Aorta (tissue), 5 donors: ENCODE measurements at regions of chr3 and their contacts with region 1.

Region 1: GRCh38 chr3:40524568-40525285 is at the start of gene ZNF621:
- DNase-seq: peak; percentile 95 to 97
- ATAC-seq: peak; percentile 99
- H3K4me3 ChIP-seq: peak within 1 kb of the TSS; percentile 44 to 68
- H3K27ac ChIP-seq: peak within 1 kb of the TSS; percentile 3 to 81
- H3K4me1 ChIP-seq: no peaks in the 10 kb centered on the region
- H3K27me3 ChIP-seq: no peaks in the 10 kb centered on the region
- total RNA-seq, gene ZNF621: 24.1 to 35.1 TPM

Region 2: DNA sequence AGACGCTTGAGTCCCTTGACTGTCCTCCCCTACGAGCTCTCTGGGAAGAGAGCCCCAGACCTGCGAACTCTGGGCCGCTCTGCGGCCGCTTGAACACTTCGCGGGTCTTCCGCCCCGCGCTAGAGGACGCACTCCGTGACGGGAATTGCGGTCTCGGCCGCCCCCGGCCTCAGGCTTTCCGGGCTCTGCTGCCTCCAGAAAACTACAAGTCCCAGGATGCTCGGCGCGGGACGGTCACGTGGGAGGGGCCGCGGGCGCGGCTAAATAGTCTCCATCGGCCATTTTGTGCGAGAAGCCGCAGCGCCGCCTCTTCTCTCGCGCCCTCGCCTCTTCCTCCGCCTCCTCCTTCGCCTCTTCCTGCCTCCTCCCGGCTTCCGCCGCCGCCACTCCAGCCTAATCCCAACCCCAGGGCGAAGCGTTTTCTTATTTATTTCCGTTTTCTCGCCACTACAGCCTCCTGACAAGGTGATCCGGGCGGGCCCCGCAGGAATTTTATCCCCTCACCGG is 215.3 kb before region 1 on chr3 and contains the start of gene EIF1B:
- intact Hi-C with region 1: loop called in 1 of 2 experiments (anchors 10 kb)
- DNase-seq: peak; percentile 99 to 100
- ATAC-seq: peak; percentile 99
- H3K4me3 ChIP-seq: peak within 1 kb of the TSS; percentile 94 to 100
- H3K27ac ChIP-seq: peak within 1 kb of the TSS; percentile 97 to 98
- H3K4me1 ChIP-seq: no peaks in the 10 kb centered on the region
- H3K27me3 ChIP-seq: no peaks in the 10 kb centered on the region
- total RNA-seq, gene EIF1B: 51.3 to 51.6 TPM

Region 3: GRCh38 chr3:40333416-40333815 is 191.3 kb before region 1 on chr3:
- intact Hi-C with region 1: no loop called
- DNase-seq: no peak
- ATAC-seq: no peak
- H3K4me3 ChIP-seq: no peak overlapping the region
- H3K27ac ChIP-seq: no peak overlapping the region
- H3K4me1 ChIP-seq: no peaks in the 10 kb centered on the region
- H3K27me3 ChIP-seq: no peaks in the 10 kb centered on the region

Region 4: DNA sequence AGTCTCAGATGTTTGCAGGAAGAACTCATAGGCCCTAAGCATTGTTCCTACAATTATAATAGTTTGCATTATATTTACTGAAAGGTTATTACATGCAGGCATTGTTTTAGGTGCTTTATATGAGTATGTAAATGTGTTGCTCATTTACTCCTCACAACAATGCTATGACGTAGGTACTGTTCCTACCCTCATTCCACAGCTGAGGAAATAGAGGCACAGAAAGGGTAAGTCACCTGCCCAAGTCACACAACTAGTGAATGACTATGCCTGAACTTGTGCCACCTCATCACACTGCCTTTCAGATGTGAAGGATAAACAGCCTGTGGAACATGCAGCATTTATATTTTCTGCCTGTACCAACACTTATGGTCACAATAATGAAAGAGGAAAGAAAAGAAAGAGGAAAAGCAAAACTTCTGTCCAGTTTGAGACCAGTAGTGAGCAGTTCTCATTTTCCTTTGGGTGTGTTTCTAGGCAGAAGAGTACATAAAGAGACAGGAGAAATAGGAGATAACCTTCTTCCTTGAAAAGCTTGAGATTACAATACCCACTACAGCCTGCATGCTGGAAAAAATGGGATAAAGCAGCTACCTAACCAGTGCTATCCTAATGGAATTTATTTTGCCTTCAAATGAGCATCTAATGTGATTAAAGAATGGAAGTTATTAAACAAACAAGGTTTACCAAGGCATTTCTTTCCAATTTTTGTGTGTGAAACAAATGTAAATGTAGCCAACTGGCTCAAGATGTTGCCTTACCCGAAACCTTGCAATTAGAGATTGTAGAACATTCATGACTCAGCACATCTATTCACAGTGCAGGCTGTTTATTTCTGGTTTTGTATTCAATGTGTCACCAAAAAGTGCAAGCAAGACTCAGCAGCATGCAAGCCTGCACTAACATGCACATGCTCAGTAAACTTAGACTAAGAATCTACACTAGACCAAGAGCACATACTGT is 158.2 kb before region 1 on chr3:
- intact Hi-C with region 1: no loop called
- DNase-seq: no peak
- ATAC-seq: no peak
- H3K4me3 ChIP-seq: no peak overlapping the region
- H3K27ac ChIP-seq: no peak overlapping the region
- H3K4me1 ChIP-seq: no peaks in the 10 kb centered on the region
- H3K27me3 ChIP-seq: no peaks in the 10 kb centered on the region

Region 5: DNA sequence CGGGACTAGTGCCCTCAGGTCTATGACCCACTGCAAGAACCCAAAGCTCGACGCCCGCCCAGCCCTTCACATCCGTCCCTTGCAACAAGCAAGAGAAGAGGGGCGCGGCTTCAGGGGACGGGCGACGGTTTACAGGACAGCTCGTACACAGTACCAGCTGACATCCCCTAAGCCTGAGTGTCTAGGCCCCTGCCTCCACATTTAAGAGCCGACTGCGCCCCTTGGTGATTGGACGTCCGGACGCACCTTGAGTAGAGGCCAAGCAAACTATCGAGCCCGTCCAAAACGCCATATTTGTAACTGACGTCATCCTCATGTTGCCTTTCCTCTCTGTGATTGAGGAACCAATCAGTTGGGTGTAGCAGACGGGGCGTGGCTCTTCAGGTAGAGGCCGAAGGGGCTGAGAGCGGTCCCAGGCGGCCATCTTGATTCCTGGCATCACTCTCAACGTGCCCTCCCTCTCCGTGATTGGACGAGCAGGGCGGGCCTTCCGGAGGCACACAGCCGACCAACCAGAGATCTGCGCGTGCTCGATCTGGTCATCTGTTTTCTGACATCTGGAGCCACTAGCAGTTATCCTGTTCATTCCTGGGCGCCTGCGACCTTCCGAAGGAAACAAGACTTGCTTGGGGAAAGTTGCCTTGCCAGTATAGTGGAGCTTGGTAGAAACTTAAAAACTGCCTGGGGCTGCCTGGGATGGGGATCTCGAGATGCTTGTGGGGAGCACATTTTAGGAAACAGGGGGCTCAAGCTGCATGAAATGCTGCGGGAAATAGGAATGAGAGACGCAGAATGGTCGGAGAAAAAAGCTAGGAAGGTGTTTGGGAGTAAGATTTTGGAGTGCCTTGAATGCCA is 71.6 kb before region 1 on chr3:
- intact Hi-C with region 1: loop called in 1 of 2 experiments (anchors 1 kb)
- DNase-seq: peak; percentile 99
- ATAC-seq: peak; percentile 96
- H3K4me3 ChIP-seq: peak overlapping the region; percentile 37 to 52
- H3K27ac ChIP-seq: peak overlapping the region in 1 of 2 donors; percentile 75
- H3K4me1 ChIP-seq: peaks cover 0 to 2% of the 10 kb centered on the region in 2 donors
- H3K27me3 ChIP-seq: no peaks in the 10 kb centered on the region

Region 6: DNA sequence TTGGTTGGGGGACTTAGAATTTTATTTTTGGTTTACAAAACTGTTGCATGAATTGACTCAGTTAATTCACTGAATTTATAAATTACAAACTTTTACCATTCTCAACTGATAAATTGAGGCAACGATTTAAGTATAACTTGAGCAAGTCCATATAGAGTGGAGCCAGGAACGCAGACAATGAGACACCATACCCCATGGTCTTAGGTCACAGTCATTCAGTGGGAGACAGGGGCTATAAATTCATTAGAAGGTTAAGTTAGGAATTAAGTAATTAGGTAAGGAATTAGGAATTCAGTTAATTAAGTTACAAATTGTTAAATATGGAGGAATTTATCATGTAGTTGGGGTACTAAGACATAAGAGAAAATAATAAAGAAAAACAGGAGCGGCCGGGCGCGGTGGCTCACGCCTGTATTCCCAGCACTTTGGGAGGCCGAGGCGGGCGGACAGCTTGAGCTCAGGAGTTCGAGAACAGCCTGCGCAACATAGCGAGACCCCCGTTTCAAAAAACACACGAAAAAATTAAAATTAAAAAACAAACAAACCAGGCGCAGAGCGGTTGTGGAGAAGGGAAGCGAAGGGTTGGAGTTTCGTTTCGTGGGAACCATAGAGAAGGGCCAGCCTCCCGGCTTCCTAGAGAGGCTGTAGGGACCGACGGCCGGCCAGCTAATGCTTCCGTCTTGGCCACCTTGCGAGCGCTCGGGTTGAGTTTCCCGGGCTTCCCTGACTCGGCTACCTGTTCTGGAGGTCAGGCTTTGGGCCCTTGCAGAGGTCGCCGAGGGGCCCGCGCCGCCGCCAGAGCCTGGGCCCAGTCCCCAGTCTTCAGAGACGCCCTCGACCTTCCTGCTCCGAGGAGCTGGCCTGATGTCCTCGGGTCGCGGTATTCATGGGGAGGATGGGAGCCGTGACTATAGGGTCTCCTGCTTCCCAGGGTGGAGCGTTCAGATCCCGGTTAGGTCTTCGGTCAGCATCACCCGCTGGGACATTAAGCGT is 48.0 kb before region 1 on chr3 and contains the start of gene ZNF619:
- intact Hi-C with region 1: loop called in 1 of 2 experiments (anchors 10 kb)
- DNase-seq: peak; percentile 82 to 92
- ATAC-seq: peak; percentile 96
- H3K4me3 ChIP-seq: peak within 1 kb of the TSS; percentile 63 to 73
- H3K27ac ChIP-seq: peak within 1 kb of the TSS in 1 of 2 donors; percentile 5
- H3K4me1 ChIP-seq: no peaks in the 10 kb centered on the region
- H3K27me3 ChIP-seq: no peaks in the 10 kb centered on the region
- total RNA-seq, gene ZNF619: 4.0 to 7.1 TPM

Region 7: GRCh38 chr3:40505599-40506462 is 18.9 kb before region 1 on chr3 and contains the start of gene ZNF620:
- intact Hi-C with region 1: loop called in 1 of 2 experiments (anchors 1 kb)
- DNase-seq: peak; percentile 80 to 92
- ATAC-seq: peak; percentile 90
- H3K4me3 ChIP-seq: peak within 1 kb of the TSS; percentile 50 to 85
- H3K27ac ChIP-seq: peak within 1 kb of the TSS in 1 of 2 donors; percentile 90
- H3K4me1 ChIP-seq: peaks cover 0 to 1% of the 10 kb centered on the region in 2 donors
- H3K27me3 ChIP-seq: no peaks in the 10 kb centered on the region
- total RNA-seq, gene ZNF620: 4.7 to 5.1 TPM

Region 8: GRCh38 chr3:42090973-42091731 is 1566.4 kb after region 1 on chr3 and contains the start of gene TRAK1:
- intact Hi-C with region 1: loop called in 1 of 2 experiments (anchors 10 kb)
- DNase-seq: no peak
- ATAC-seq: peak; percentile 72
- H3K4me3 ChIP-seq: peak within 1 kb of the TSS in 1 of 2 donors; percentile 18
- H3K27ac ChIP-seq: peak within 1 kb of the TSS in 1 of 2 donors; percentile 15
- H3K4me1 ChIP-seq: no peaks in the 10 kb centered on the region
- H3K27me3 ChIP-seq: no peaks in the 10 kb centered on the region
- total RNA-seq, gene TRAK1: 33.5 to 37.7 TPM